ENCODE measurements at regions of chr2 and their contacts with region 1.

Region 1: DNA sequence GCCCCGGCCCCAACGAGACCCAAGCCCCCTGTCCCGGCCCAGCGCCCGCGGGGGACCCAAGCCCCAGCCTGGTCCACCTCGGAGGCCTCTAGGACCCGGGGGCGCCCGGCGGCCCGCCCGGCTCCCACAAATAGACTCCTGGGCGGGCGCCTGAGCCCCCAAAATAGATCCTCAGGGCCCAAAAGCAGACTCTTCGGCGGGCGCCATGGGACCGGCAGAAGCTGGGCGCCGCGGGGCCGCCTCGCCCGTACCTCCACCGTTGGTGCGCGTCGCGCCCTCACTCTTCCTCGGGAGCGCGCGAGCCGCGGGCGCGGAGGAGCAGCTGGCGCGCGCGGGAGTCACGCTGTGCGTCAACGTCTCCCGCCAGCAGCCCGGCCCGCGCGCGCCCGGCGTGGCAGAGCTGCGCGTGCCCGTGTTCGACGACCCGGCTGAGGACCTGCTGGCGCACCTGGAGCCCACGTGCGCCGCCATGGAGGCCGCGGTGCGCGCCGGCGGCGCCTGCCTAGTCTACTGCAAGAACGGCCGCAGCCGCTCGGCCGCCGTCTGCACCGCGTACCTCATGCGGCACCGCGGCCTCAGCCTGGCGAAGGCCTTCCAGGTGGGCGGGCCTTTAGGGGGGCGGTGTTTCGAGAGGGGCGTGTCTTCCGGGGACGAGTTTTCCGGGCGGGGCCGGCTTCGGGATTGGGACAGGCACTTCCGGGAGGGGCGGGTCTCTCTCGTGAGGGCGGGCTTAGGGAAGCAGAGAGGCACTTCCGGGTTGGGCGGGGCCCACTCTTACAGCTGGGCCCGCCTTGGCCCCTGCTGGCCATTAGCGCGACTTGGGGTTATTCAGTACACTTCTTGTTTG is 546 bp downstream of the DUSP28 start:
- DNase-seq: peak; percentile 100
- H3K4me3 Mint-ChIP-seq: peak overlapping the region; percentile 88
- H3K27ac Mint-ChIP-seq: peak overlapping the region; percentile 89
- H3K4me1 Mint-ChIP-seq: peaks cover 75% of the 10 kb centered on the region
- H3K27me3 Mint-ChIP-seq: no peaks in the 10 kb centered on the region

Region 2: GRCh38 chr2:240021488-240022104 is 539.1 kb before region 1 on chr2:
- CTCF ChIA-PET with region 1: no interaction called
- POLR2A ChIA-PET with region 1: no interaction called
- intact Hi-C with region 1: loop called (anchors 10 kb)
- DNase-seq: peak; percentile 76
- H3K4me3 Mint-ChIP-seq: no peak overlapping the region
- H3K27ac Mint-ChIP-seq: no peak overlapping the region
- H3K4me1 Mint-ChIP-seq: peaks cover 19% of the 10 kb centered on the region
- H3K27me3 Mint-ChIP-seq: no peaks in the 10 kb centered on the region

Region 3: GRCh38 chr2:240513549-240514287 is 47.0 kb before region 1 on chr2:
- CTCF ChIA-PET with region 1: interaction called, 26 read pairs
- POLR2A ChIA-PET with region 1: interaction called, 4 read pairs
- intact Hi-C with region 1: loop called (anchors 5 kb)
- DNase-seq: peak; percentile 91
- H3K4me3 Mint-ChIP-seq: no peak overlapping the region
- H3K27ac Mint-ChIP-seq: peak overlapping the region; percentile 70
- H3K4me1 Mint-ChIP-seq: peaks cover 15% of the 10 kb centered on the region
- H3K27me3 Mint-ChIP-seq: no peaks in the 10 kb centered on the region

Region 4: DNA sequence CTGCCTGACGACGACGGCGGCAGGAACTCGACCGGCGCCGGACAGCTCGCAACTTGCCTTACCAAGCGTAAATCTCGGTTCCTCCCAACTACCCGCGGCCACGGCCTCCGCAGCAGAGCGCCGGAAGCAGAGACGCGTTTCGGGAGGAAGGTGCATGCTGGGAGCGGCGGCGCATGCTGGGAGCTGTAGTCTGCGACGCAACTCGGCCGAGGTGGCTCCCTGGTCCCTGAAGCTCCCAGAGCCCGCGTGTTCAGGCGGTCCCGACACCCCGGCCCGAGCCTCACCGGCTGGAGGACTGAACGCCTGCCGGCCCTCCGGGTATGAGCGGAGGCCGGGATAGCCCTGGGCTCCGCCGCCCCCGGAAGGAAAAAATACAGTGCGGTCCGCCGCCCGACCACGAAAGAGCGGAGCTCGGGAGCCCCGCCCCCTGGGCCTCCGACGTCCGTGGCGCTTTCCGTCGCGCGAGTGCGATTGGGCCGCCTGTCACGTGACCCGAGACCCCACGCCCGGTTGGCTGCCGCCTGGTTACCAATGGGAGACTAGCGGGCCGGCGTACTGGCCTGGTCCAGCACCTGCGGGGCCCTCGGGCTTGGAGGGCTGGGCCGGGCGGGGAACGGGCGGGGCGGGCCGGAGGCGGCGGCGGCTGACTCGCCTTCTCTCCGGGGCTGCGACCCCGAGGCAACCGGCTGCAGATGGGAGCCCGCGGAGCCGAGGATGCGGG is 25.7 kb after region 1 on chr2 and contains the start of gene CAPN10:
- CTCF ChIA-PET with region 1: interaction called, 89 read pairs
- POLR2A ChIA-PET with region 1: interaction called, 57 read pairs
- intact Hi-C with region 1: loop called (anchors 1 kb)
- DNase-seq: peak; percentile 98
- H3K4me3 Mint-ChIP-seq: peak within 1 kb of the TSS; percentile 98
- H3K27ac Mint-ChIP-seq: peak within 1 kb of the TSS; percentile 86
- H3K4me1 Mint-ChIP-seq: peaks cover 39% of the 10 kb centered on the region
- H3K27me3 Mint-ChIP-seq: no peaks in the 10 kb centered on the region
- total RNA-seq, gene CAPN10: 32.6 to 33.9 TPM

Region 5: DNA sequence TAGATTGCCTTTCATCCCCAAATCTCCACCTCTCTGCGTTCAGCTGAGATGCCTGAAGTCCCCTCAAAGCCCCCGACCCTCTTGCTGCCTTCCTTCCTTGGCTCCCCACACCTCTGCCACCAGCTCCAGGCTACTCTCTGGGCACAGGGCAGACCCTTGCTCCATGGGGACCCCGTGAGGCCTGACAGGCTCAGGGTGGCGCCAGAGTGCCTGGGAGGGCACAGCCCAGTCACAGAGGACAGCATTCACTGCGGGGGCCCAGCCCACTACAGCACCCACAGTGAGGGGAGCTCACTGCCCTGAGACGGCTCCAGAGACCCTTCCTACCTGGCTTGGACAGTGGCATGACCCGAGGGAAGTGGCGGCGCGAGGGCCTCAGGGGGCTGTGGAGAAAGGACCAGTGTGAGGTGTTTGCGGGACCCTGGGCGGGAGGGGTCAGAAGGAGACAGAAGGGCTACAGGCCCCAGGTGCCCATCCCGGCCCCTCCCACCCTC is 181.9 kb after region 1 on chr2:
- CTCF ChIA-PET with region 1: no interaction called
- POLR2A ChIA-PET with region 1: no interaction called
- intact Hi-C with region 1: no loop called
- DNase-seq: no peak
- H3K4me3 Mint-ChIP-seq: no peak overlapping the region
- H3K27ac Mint-ChIP-seq: no peak overlapping the region
- H3K4me1 Mint-ChIP-seq: peaks cover 6% of the 10 kb centered on the region
- H3K27me3 Mint-ChIP-seq: no peaks in the 10 kb centered on the region

Region 6: GRCh38 chr2:241064008-241064801 is 503.5 kb after region 1 on chr2:
- CTCF ChIA-PET with region 1: no interaction called
- POLR2A ChIA-PET with region 1: no interaction called
- intact Hi-C with region 1: no loop called
- DNase-seq: peak; percentile 64
- H3K4me3 Mint-ChIP-seq: no peak overlapping the region
- H3K27ac Mint-ChIP-seq: no peak overlapping the region
- H3K4me1 Mint-ChIP-seq: peaks cover 3% of the 10 kb centered on the region
- H3K27me3 Mint-ChIP-seq: no peaks in the 10 kb centered on the region

Region 7: DNA sequence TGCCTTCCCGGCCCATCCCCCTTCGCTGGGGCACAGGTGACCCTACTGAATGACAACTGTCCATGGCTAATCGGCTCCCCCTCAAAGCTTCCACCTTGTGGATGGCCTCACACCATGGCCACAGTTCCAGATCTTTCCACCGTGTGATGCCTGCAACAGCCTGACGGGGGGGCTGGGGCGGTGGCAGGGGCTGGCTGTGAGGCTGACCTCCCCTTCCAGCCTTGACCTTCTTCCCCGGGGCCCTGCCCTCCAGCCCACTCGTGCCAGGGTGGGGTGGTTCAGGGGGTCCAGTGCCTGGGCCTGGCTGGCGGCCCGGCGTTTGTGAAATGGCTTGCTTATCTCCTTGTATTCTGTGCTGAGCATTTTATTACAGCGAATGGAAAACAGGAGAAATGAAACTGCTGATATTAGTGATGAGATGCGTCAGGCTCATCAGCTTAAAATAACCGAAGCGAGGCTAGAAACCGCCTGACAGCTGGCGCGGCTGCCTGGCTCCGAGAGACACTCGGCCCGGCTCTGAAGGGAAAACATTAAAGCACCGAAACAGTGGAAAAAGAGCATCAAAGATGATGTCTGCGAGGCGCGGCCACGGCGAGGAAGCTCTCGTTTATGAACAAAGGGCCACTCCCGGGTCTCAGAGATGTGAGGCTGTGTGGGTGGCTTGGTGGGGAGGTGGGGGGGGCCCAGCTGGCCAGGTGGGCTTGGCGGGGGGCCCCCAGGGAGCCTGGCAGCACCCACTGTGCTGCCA is 1298.9 kb after region 1 on chr2:
- CTCF ChIA-PET with region 1: no interaction called
- POLR2A ChIA-PET with region 1: no interaction called
- intact Hi-C with region 1: loop called (anchors 10 kb)
- DNase-seq: peak; percentile 85
- H3K4me3 Mint-ChIP-seq: peak overlapping the region; percentile 90
- H3K27ac Mint-ChIP-seq: peak overlapping the region; percentile 95
- H3K4me1 Mint-ChIP-seq: peaks cover 57% of the 10 kb centered on the region
- H3K27me3 Mint-ChIP-seq: peaks cover 4% of the 10 kb centered on the region